ENCODE measurements at regions of chr19 and their contacts with region 1.

Region 1: DNA sequence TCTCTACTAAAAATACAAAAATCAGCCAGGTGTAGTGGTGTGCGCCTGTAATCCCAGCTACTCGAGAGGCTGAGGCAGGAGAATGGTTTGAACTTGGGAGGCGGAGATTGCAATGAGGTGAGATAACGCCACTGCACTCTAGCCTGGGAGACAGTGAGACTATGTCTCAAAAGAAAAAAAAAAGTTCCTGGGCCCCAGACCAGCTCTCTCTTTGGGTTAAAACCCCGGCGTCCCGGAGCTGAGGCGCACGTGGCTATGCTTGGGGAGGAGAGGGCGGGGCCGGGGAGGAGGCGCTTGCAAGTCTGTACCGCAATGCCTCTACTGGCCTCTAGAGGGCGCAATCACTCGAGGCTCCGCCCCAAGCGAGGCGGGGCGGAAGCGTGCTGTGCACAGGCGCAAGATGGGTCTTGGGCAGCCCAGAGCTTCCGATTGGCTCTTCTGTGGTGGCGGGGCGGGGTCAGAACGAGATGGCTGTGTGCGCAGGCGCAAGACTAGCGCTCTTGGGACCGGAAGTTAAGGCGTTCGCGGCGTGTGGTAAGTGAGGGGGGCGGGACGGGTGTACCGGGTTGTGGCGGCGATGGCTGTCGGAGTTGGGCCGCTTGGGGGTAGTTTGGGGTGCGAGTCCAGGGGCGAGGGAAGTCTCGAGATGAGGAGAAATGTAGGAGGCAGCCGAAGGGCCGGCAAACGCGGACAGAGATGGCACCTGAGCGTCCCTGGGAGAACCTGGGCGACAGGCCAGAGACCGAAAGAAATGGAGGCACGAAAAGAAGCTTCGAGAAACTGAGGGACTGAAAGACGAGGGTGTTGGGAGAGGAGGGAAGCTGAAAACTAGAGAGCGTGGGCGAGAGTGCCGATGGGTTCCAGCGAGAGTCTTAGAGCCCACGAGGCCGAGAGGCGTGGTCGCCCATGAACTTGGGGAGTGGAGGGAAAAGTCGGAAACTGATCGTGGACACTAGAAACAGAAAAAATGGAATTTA is at the start of gene DHX34:
- DNase-seq: peak; percentile 100
- H3K4me3 Mint-ChIP-seq: peak within 1 kb of the TSS; percentile 97
- H3K27ac Mint-ChIP-seq: peak within 1 kb of the TSS; percentile 89
- H3K4me1 Mint-ChIP-seq: peaks cover 43% of the 10 kb centered on the region
- H3K27me3 Mint-ChIP-seq: no peaks in the 10 kb centered on the region
- total RNA-seq, gene DHX34: 12.7 to 15.7 TPM

Region 2: DNA sequence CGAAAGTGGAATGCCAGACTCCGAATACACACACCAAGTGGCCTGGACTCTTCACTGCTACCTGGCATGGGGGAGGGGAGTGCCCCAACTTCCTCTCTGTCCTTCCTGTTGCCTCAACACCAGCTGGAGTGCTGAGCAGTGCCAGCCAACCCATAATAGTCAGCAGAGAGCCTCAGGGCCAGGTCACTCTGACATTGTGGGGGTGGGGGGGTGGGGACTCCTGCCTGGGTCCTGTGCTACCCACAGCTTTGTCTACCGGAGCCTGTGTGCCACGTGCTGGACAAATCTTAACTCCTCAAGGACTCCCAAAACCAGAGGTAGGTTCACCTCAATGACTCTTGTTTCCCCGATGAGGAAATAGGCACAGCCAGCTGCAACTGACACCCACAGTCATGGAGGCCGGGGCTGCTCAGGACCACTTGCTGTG is 12.2 kb before region 1 on chr19:
- CTCF ChIA-PET with region 1: interaction called, 26 read pairs
- POLR2A ChIA-PET with region 1: interaction called, 5 read pairs
- intact Hi-C with region 1: no loop called
- DNase-seq: peak; percentile 48
- H3K4me3 Mint-ChIP-seq: no peak overlapping the region
- H3K27ac Mint-ChIP-seq: no peak overlapping the region
- H3K4me1 Mint-ChIP-seq: peaks cover 11% of the 10 kb centered on the region
- H3K27me3 Mint-ChIP-seq: no peaks in the 10 kb centered on the region

Region 3: GRCh38 chr19:47391510-47392223 is 42.6 kb after region 1 on chr19:
- CTCF ChIA-PET with region 1: interaction called, 25 read pairs
- POLR2A ChIA-PET with region 1: interaction called, 3 read pairs
- intact Hi-C with region 1: no loop called
- DNase-seq: peak; percentile 87
- H3K4me3 Mint-ChIP-seq: no peak overlapping the region
- H3K27ac Mint-ChIP-seq: no peak overlapping the region
- H3K4me1 Mint-ChIP-seq: no peaks in the 10 kb centered on the region
- H3K27me3 Mint-ChIP-seq: peaks cover 5% of the 10 kb centered on the region

Region 4: DNA sequence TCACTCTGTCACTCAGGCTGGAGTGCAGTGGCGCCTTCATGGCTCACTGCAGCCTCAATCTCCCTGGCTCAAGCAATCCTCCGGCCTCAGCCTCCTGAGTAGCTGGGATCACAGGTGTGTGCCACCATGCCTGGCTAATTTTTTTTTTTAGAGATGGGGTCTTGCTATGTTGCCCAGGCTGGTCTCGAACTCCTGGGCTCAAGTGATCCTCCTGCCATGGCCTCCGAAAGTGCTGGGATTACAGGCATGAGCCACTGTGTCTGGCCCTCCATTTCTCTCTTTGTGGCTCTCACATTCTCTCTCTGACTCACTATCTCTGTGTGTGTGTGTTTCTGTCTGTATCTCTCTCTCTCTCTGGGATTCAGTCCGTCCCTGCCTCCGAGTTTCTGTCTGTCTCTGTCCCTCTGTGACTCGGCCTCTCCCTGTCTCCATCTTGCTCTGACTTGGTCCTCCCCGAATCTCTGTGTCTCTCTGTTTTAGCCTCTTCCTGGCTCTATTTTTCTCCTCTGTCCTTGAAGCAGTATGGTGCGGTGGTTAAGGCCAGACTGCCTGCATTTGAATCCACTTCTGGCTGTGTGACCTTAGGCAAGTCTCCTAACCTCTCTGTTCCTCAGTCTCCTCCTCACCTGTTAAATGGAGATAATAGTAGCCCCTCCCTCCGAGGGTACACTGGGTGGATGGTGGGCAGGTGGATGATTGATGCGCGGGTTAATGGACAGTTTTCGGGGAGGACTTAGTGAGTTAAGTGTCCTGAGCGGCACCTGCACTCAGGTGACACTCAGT is 59.2 kb after region 1 on chr19:
- CTCF ChIA-PET with region 1: no interaction called
- POLR2A ChIA-PET with region 1: no interaction called
- intact Hi-C with region 1: no loop called
- DNase-seq: no peak
- H3K4me3 Mint-ChIP-seq: no peak overlapping the region
- H3K27ac Mint-ChIP-seq: no peak overlapping the region
- H3K4me1 Mint-ChIP-seq: no peaks in the 10 kb centered on the region
- H3K27me3 Mint-ChIP-seq: peaks cover 42% of the 10 kb centered on the region

Region 5: DNA sequence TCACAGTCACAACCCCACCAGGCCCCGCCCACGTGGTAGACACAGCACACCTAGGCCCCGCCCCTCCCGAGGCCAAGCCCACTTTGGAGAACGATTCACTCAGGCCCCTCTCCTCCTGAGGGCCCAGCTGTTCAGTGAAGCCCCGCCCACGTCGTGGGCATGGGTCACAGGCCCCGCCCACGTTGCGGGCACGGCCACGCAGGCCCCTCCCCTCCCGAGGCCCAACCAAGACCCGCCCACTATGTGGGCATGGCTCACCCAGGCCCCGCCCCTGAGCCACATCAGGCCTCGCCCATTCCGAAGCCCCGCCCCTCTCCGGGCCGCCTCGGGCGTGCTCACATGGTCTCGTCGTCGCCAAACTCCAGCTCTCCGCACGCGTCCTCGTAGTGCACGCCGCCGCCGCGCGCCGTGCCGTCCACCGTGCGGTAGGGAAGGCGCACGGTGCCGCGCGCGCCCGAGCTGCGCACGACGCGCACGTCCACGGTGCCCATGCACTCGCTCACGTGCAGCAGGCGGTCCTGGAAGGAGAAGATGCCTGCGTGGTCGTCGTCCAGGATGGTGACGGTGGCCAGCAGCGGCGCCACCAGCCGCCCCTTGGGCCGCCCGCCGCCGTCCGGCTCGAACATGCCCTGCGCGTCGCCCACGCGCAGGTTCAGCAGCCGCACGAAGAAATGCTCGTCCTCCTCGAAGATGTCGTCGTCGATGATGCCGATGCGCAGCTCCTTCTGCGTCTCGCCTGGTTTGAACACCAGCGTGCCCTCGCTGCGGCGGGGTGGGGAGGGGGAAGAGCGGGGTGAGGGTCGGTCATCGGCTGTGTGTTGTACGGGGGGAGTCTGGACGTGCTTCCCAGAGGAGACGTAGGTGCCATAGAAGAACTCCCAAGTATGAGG is 98.6 kb after region 1 on chr19:
- CTCF ChIA-PET with region 1: no interaction called
- POLR2A ChIA-PET with region 1: no interaction called
- intact Hi-C with region 1: no loop called
- DNase-seq: peak; percentile 80
- H3K4me3 Mint-ChIP-seq: peak overlapping the region; percentile 42
- H3K27ac Mint-ChIP-seq: no peak overlapping the region
- H3K4me1 Mint-ChIP-seq: peaks cover 39% of the 10 kb centered on the region
- H3K27me3 Mint-ChIP-seq: peaks cover 52% of the 10 kb centered on the region